ENCODE measurements at regions of chr1 and their contacts with region 1.

Region 1: DNA sequence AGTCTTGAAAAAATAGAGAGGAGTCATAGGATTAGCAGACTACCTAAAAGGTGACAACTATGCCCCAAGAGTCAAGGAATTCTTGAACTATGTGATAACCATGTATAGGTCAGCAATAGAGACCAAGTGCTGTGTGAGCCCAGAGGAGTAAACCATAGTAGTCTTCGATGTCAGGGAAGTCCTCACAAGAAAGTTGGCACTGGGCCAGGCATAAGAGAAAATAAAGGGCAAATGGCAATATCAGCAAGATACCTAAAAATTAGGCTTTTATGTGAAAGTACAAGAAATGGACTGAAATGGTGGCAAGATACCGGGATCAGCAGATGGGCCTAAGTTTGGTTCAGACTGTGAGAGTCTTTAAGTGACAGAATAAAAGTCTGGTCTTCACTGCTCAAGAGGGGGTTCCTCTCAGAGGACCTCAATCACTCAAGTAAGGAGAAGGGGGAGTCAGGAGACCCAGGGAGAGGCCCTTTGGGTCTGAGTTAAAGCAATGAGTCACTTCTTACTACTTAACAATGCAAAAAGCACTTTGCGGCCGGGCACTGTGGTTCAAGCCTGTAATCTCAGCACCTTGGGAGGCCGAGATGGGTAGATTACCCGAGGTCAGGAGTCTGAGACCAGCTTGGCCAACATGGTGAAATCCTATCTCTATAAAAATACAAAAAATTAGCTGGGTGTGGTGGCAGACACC is 95.0 kb downstream of the TEX35 start:
- DNase-seq: peak; percentile 69
- ATAC-seq: peak; percentile 11
- H3K4me3 ChIP-seq: peak overlapping the region in 1 of 5 experiments; percentile 39
- H3K4me3 Mint-ChIP-seq: peak overlapping the region; percentile 69
- H3K27ac ChIP-seq: peak overlapping the region; percentile 96 to 98
- H3K27ac Mint-ChIP-seq: peak overlapping the region; percentile 99
- H3K4me1 ChIP-seq: peaks cover 83 to 88% of the 10 kb centered on the region in 2 donors
- H3K4me1 Mint-ChIP-seq: peaks cover 78% of the 10 kb centered on the region
- H3K27me3 ChIP-seq: no peaks in the 10 kb centered on the region
- H3K27me3 Mint-ChIP-seq: no peaks in the 10 kb centered on the region
- CTCF ChIP-seq: no peak

Region 2: DNA sequence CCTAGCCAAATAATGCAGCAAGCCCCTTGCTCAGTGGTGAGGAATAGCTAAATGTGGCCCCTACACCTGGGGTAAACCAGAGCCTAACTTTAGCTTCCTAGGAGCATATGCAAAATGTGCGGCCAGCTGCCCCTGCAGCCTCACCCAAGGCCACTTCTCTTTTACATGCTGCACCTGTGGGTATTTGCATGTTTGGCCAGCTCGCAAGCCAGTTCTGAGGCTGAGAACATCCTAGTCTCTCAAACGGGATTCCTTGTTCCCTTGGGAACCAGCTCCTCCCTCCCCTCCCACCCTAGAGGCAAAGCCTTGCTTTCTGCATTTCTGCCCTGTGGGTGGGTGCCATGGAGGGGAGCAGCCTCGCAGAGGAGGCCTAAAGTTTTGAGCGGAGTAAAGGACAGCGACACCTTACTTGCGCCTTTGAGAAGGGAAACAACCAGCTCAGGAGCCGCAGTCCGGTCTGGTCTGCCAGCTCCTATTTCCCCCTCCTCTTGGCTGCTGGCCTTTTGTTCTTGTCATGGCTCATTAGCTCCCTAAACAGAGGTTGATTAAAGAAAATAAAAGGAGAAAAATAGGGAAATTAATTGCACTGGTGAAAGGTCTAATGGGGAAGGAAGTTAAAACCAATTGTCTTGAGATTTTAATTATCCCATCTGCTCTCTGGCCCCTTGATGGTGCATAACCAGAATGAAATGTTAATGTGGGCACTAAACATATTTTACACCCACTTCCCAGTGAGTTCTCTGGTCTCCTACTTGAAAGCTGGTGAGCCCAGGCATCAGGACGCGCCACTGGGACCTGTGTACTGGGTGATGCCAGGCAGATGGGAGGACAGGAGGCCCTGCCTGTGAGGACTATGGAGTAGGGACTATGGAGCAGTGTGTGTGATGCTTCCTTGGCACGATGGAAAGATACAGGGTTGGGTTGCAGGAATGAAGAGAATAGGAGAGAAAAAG is 26.2 kb before region 1 on chr1:
- CTCF ChIA-PET with region 1: interaction called, 53 read pairs
- POLR2A ChIA-PET with region 1: interaction called, 62 read pairs
- intact Hi-C with region 1: loop called (anchors 1 kb)
- DNase-seq: peak; percentile 87
- ATAC-seq: peak; percentile 65
- H3K4me3 ChIP-seq: peak overlapping the region in 3 of 5 experiments; percentile 24 to 53 (median 29)
- H3K4me3 Mint-ChIP-seq: peak overlapping the region; percentile 70
- H3K27ac ChIP-seq: peak overlapping the region; percentile 95 to 97
- H3K27ac Mint-ChIP-seq: peak overlapping the region; percentile 95
- H3K4me1 ChIP-seq: peaks cover 91 to 92% of the 10 kb centered on the region in 2 donors
- H3K4me1 Mint-ChIP-seq: peaks cover 93% of the 10 kb centered on the region
- H3K27me3 ChIP-seq: no peaks in the 10 kb centered on the region
- H3K27me3 Mint-ChIP-seq: no peaks in the 10 kb centered on the region
- CTCF ChIP-seq: no peak

Region 3: DNA sequence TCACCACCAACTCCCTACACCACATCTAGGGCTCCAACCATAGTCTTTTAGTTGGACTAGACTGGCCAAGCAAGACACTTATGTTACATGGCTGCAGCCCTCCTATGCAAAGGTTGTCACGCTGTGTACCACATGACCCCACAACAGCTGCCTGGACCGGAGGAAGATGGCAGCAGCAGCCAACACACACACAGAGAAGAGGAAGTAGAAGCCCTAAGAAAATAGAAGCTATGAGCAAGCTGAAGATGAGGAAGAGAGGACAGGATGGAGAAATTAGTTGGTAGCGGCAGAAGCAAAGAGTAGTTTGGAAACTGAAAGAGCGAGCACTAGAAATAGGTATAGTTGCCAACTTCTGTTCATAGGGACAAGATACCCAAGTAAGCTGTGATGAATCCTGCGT is 56.4 kb after region 1 on chr1:
- CTCF ChIA-PET with region 1: interaction called, 3 read pairs
- POLR2A ChIA-PET with region 1: interaction called, 5 read pairs
- intact Hi-C with region 1: loop called (anchors 1 kb)
- DNase-seq: peak; percentile 82
- ATAC-seq: peak; percentile 89
- H3K4me3 ChIP-seq: peak overlapping the region in 2 of 5 experiments; percentile 13 to 17
- H3K4me3 Mint-ChIP-seq: peak overlapping the region; percentile 47
- H3K27ac ChIP-seq: peak overlapping the region; percentile 70 to 84
- H3K27ac Mint-ChIP-seq: peak overlapping the region; percentile 84
- H3K4me1 ChIP-seq: peaks cover 80 to 92% of the 10 kb centered on the region in 2 donors
- H3K4me1 Mint-ChIP-seq: peaks cover 83% of the 10 kb centered on the region
- H3K27me3 ChIP-seq: no peaks in the 10 kb centered on the region
- H3K27me3 Mint-ChIP-seq: no peaks in the 10 kb centered on the region
- CTCF ChIP-seq: no peak

Region 4: GRCh38 chr1:178739285-178740045 is 131.6 kb after region 1 on chr1:
- CTCF ChIA-PET with region 1: no interaction called
- POLR2A ChIA-PET with region 1: interaction called, 13 read pairs
- intact Hi-C with region 1: no loop called
- DNase-seq: no peak
- ATAC-seq: no peak
- H3K4me3 ChIP-seq: no peak overlapping the region
- H3K4me3 Mint-ChIP-seq: peak overlapping the region; percentile 2
- H3K27ac ChIP-seq: peak overlapping the region in 1 of 2 donors; percentile 70
- H3K27ac Mint-ChIP-seq: peak overlapping the region; percentile 75
- H3K4me1 ChIP-seq: peaks cover 32 to 41% of the 10 kb centered on the region in 2 donors
- H3K4me1 Mint-ChIP-seq: peaks cover 65% of the 10 kb centered on the region
- H3K27me3 ChIP-seq: no peaks in the 10 kb centered on the region
- H3K27me3 Mint-ChIP-seq: no peaks in the 10 kb centered on the region
- CTCF ChIP-seq: no peak

Region 5: DNA sequence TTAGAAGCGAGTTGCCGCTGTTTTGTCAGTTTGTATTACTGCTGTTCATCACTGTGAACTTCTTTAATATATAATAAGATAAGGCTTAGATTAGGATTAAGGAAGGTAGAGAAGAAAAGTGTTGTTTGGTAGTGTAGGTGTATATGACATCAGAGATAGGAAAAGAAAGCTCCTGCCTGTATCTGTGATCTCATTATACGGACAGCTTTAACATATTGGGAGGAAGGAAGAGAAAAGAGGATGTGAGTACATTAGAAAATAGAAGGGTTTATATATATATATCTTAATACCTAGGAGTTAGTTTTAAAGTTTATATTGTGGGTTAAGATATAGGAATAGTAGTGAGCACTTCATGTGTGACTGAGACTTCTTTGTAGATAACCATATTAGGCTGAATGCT is 188.2 kb after region 1 on chr1:
- CTCF ChIA-PET with region 1: no interaction called
- POLR2A ChIA-PET with region 1: no interaction called
- intact Hi-C with region 1: no loop called
- DNase-seq: peak; percentile 48
- ATAC-seq: peak; percentile 67
- H3K4me3 ChIP-seq: no peak overlapping the region
- H3K4me3 Mint-ChIP-seq: peak overlapping the region; percentile 55
- H3K27ac ChIP-seq: peak overlapping the region; percentile 43 to 87
- H3K27ac Mint-ChIP-seq: peak overlapping the region; percentile 76
- H3K4me1 ChIP-seq: peaks cover 22 to 33% of the 10 kb centered on the region in 2 donors
- H3K4me1 Mint-ChIP-seq: peaks cover 48% of the 10 kb centered on the region
- H3K27me3 ChIP-seq: no peaks in the 10 kb centered on the region
- H3K27me3 Mint-ChIP-seq: no peaks in the 10 kb centered on the region
- CTCF ChIP-seq: no peak

Measured in B cell (primary cell).